ENCODE measurements at regions of chr6 and their contacts with region 1.

Region 1: DNA sequence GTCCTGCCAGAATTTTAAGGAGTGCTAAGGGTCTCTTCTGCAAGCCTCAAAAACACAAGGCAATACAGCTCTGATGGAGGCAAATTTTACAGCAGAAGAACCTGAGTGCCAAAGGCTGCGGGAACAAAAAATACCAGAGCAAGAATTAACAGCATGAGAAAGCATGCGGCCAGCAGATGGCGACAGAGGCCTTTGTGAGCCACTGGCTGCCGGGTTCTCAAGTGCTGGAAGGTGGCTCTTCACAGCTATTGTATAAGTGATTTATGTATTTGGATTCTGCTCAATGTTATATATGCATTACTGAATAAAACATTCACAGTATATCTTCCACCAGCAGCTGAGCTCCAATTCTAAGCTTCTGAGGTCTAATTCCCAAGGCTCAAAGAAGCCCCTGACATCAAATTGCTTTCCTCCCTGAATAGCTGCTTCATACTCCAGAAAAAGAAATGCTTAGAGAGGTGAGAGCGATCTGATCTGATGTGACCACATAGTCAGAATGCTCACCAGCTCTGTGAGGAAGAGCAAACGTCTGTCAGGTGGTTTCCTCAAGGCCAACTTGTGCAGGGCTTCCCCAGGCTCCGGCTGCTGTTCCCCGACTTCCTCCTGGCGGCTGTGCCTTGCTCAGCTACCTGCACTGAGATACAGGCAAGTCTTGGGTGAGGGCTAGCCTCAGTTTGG is 58.6 kb downstream of the PPP1R3G start:
- DNase-seq: peak; percentile 27
- ATAC-seq: peak; percentile 93
- H3K4me3 ChIP-seq: no peak overlapping the region
- H3K27ac ChIP-seq: no peak overlapping the region
- H3K4me1 ChIP-seq: peaks cover 11% of the 10 kb centered on the region
- H3K27me3 ChIP-seq: no peaks in the 10 kb centered on the region
- CTCF ChIP-seq: peak; percentile 82 to 99 (median 88); a peak in 5 of 6 replicates
- EP300 ChIP-seq: no peak
- POLR2A ChIP-seq: no peak
- RAD21 ChIP-seq: peak; percentile 98

Region 2: DNA sequence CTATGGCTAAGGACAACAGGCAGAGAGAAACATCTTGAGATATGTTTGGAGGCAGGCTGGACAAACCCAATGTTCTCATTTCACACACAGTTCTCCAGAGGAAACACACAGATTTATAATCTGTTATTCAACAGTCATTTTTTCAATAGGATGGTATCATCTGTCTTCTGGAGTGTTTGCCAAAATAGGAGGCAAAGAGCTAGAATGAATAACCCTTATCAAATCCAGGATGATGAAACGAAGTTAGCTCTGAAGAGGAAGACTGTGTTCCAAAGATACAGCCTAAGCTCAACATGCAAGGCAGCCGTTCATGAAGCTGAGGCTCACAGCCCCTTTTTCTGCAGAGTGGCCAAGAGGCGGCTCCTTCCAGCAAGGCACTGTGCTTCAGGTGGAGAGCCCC is 12.1 kb after region 1 on chr6:
- CTCF ChIA-PET with region 1: interaction called, 13 read pairs
- POLR2A ChIA-PET with region 1: no interaction called
- RAD21 ChIA-PET with region 1: interaction called, 3 read pairs
- SMC1A ChIA-PET with region 1: interaction called, 3 read pairs
- in situ Hi-C with region 1: no loop called
- intact Hi-C with region 1: no loop called
- DNase-seq: no peak
- ATAC-seq: no peak
- H3K4me3 ChIP-seq: no peak overlapping the region
- H3K27ac ChIP-seq: no peak overlapping the region
- H3K4me1 ChIP-seq: no peaks in the 10 kb centered on the region
- H3K27me3 ChIP-seq: no peaks in the 10 kb centered on the region
- CTCF ChIP-seq: no peak
- EP300 ChIP-seq: no peak
- POLR2A ChIP-seq: no peak
- RAD21 ChIP-seq: no peak

Region 3: GRCh38 chr6:5214570-5215052 is 70.8 kb after region 1 on chr6:
- CTCF ChIA-PET with region 1: interaction called, 12 read pairs
- POLR2A ChIA-PET with region 1: interaction called, 5 read pairs
- RAD21 ChIA-PET with region 1: interaction called, 6 read pairs
- SMC1A ChIA-PET with region 1: interaction called, 8 read pairs
- in situ Hi-C with region 1: no loop called
- intact Hi-C with region 1: loop called (anchors 5 kb)
- DNase-seq: no peak
- ATAC-seq: peak; percentile 87
- H3K4me3 ChIP-seq: no peak overlapping the region
- H3K27ac ChIP-seq: no peak overlapping the region
- H3K4me1 ChIP-seq: no peaks in the 10 kb centered on the region
- H3K27me3 ChIP-seq: no peaks in the 10 kb centered on the region
- CTCF ChIP-seq: peak; percentile 58 to 73 (median 70)
- EP300 ChIP-seq: no peak
- POLR2A ChIP-seq: no peak
- RAD21 ChIP-seq: peak; percentile 89

Region 4: DNA sequence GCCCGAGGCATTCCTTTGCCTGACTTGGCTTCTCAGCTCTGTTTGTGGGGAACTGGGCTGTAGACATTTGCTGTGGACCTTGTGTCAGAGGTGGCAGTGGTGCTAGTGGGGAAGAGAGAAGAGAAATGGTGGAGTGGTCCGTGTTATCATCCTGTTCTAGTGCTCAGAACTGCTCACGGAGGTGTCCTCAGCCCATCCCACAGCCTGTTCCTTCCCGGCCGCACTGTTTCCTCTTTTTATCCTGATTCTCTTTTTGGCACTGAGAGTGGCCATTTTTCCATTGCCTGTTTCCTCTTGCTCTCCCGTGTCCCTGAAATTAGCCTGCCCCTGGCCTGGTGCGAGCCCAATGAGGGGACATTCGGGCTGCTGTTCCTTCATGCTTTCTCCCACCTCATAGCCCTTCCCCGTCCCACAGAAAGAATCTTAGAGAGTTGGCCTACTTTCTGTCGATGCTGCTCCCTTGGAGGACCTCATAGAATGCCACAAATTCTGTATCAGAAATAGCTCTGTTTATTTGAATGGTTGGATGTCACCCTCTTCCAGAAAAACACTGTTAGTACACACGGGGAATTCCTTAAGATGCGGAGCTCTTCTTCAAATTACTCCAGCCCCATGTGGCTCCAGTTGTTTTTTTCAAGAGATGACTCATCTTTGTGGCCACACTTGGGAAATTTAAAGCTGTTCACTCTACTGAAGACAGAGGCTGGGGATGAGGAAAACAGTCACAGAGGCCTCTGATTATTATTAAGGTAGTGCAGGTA is 143.6 kb after region 1 on chr6:
- CTCF ChIA-PET with region 1: interaction called, 13 read pairs
- POLR2A ChIA-PET with region 1: no interaction called
- RAD21 ChIA-PET with region 1: no interaction called
- SMC1A ChIA-PET with region 1: no interaction called
- in situ Hi-C with region 1: no loop called
- intact Hi-C with region 1: no loop called
- DNase-seq: no peak
- ATAC-seq: no peak
- H3K4me3 ChIP-seq: no peak overlapping the region
- H3K27ac ChIP-seq: no peak overlapping the region; the same call in 1 of the 2 replicates
- H3K4me1 ChIP-seq: peaks cover 14% of the 10 kb centered on the region
- H3K27me3 ChIP-seq: no peaks in the 10 kb centered on the region
- CTCF ChIP-seq: no peak
- EP300 ChIP-seq: no peak
- POLR2A ChIP-seq: no peak
- RAD21 ChIP-seq: no peak

Region 5: GRCh38 chr6:5315881-5316280 is 172.1 kb after region 1 on chr6:
- CTCF ChIA-PET with region 1: interaction called, 16 read pairs
- POLR2A ChIA-PET with region 1: no interaction called
- RAD21 ChIA-PET with region 1: interaction called, 3 read pairs
- SMC1A ChIA-PET with region 1: interaction called, 3 read pairs
- in situ Hi-C with region 1: no loop called
- intact Hi-C with region 1: no loop called
- DNase-seq: no peak
- ATAC-seq: no peak
- H3K4me3 ChIP-seq: no peak overlapping the region
- H3K27ac ChIP-seq: no peak overlapping the region
- H3K4me1 ChIP-seq: peaks cover 6% of the 10 kb centered on the region; the same call in 1 of the 2 replicates
- H3K27me3 ChIP-seq: no peaks in the 10 kb centered on the region
- CTCF ChIP-seq: no peak
- EP300 ChIP-seq: no peak
- POLR2A ChIP-seq: no peak
- RAD21 ChIP-seq: no peak

Measured in GM12878 (cell line).